Mammary epithelial cell (primary cell): ENCODE measurements at regions of chr7 and their contacts with region 1.

Region 1: GRCh38 chr7:98372993-98373392 is 27.9 kb downstream of the BAIAP2L1 start:
- DNase-seq: peak; percentile 91
- H3K4me3 ChIP-seq: no peak overlapping the region
- H3K27ac ChIP-seq: peak overlapping the region; percentile 63
- H3K4me1 ChIP-seq: peaks cover 29% of the 10 kb centered on the region
- H3K27me3 ChIP-seq: no peaks in the 10 kb centered on the region
- CTCF ChIP-seq: no peak

Region 2: DNA sequence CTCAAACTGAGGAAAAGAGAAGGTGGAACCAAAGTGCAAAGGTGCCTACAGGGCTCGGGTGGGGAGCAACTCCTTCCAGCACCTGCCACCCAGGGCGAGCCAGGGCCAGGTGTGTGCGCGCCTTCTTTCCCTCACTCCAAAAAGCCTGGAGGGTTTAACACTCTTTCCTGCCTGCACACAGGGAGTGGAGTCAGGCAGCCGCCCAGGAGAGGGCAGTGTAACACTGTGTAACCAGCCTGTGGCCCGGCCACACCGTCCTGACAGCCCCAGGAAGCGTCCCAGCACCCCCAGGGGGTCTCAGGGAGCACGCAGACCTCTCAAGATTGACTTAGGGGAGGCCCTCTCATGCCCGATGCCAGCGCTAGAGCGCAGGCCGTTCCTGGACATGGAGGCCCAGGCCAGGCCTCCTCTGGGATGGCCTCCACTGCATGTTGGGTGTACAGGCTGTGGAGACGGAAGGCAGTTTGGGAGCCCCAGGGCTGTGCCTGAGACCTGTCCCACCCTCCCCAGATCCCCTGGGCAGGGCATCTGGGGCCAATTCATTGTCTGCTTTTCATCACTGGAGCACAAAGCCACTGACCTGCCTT is 78.1 kb before region 1 on chr7:
- CTCF ChIA-PET with region 1: no interaction called
- dilution Hi-C with region 1: loop called (anchors 5 kb)
- in situ Hi-C with region 1: no loop called
- intact Hi-C with region 1: no loop called
- DNase-seq: peak; percentile 54
- H3K4me3 ChIP-seq: no peak overlapping the region
- H3K27ac ChIP-seq: no peak overlapping the region
- H3K4me1 ChIP-seq: no peaks in the 10 kb centered on the region
- H3K27me3 ChIP-seq: no peaks in the 10 kb centered on the region
- CTCF ChIP-seq: peak; percentile 61 to 77

Region 3: DNA sequence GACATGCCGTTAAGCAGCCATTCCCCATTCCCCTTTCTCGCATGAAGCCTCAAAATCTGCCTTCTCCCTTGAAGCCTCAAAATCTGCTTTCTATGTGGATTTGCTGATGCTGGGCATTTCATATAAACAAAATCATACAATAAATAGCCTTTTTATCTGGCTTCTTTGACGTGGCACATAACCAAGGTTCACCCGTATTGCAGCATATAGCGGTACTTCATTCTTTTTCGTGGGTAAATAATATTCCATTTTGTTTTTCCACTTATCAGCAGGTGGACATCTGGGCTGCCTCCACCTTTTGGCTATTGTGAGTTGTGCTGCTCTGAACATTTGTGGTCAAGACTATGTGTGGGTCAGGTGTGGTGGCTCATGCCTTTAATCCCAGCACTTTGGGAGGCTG is 34.6 kb before region 1 on chr7:
- CTCF ChIA-PET with region 1: interaction called, 23 read pairs
- dilution Hi-C with region 1: no loop called
- in situ Hi-C with region 1: no loop called
- intact Hi-C with region 1: no loop called
- DNase-seq: no peak
- H3K4me3 ChIP-seq: no peak overlapping the region
- H3K27ac ChIP-seq: no peak overlapping the region
- H3K4me1 ChIP-seq: no peaks in the 10 kb centered on the region
- H3K27me3 ChIP-seq: no peaks in the 10 kb centered on the region
- CTCF ChIP-seq: no peak

Region 4: DNA sequence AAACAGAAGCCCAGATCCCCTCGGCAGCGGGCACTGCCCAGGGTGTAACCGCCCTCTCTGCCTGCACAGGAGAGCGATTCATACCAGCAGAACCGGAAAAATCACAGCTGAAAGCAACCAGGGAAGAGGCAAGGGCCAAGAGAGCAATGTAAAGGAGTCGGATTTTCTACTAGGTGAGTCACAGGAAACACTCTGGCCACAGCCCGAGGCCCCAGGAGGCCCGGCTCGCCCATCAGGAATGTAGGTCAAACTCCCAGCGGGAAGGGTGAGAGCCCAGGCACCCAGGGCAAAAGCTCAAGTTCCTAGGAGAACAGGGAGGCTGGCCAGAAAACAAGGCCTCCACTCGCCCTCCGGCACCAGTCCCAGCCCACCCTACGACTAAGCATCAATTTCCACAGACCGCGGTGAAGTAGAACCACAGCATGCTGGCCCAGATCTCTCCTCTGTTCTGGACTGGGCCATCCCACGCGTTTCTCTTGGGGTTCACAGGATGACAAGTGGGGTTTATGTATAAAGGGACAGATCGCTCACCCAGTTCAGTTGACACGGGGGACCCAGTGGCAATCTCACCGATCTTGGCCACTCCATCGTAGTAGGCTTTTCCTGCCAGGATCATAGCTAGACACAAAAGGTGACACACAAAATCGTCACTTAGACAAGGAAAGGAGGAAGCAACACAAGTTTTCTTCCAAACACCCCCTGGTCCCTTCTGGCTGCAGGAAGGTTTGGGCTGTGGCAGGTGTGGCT is 18.3 kb before region 1 on chr7:
- CTCF ChIA-PET with region 1: no interaction called
- dilution Hi-C with region 1: no loop called
- in situ Hi-C with region 1: no loop called
- intact Hi-C with region 1: loop called (anchors 1 kb)
- DNase-seq: peak; percentile 93
- H3K4me3 ChIP-seq: peak overlapping the region in 2 of 3 experiments; percentile 4 to 22
- H3K27ac ChIP-seq: peak overlapping the region; percentile 88
- H3K4me1 ChIP-seq: peaks cover 31% of the 10 kb centered on the region
- H3K27me3 ChIP-seq: no peaks in the 10 kb centered on the region
- CTCF ChIP-seq: no peak

Region 5: GRCh38 chr7:98464558-98464940 is 91.6 kb after region 1 on chr7:
- CTCF ChIA-PET with region 1: no interaction called
- dilution Hi-C with region 1: loop called (anchors 5 kb)
- in situ Hi-C with region 1: no loop called
- intact Hi-C with region 1: no loop called
- DNase-seq: no peak
- H3K4me3 ChIP-seq: no peak overlapping the region
- H3K27ac ChIP-seq: no peak overlapping the region
- H3K4me1 ChIP-seq: no peaks in the 10 kb centered on the region
- H3K27me3 ChIP-seq: no peaks in the 10 kb centered on the region
- CTCF ChIP-seq: no peak